OCI-LY7 (cell line): ENCODE measurements at regions of chr6 and their contacts with region 1.

Region 1: DNA sequence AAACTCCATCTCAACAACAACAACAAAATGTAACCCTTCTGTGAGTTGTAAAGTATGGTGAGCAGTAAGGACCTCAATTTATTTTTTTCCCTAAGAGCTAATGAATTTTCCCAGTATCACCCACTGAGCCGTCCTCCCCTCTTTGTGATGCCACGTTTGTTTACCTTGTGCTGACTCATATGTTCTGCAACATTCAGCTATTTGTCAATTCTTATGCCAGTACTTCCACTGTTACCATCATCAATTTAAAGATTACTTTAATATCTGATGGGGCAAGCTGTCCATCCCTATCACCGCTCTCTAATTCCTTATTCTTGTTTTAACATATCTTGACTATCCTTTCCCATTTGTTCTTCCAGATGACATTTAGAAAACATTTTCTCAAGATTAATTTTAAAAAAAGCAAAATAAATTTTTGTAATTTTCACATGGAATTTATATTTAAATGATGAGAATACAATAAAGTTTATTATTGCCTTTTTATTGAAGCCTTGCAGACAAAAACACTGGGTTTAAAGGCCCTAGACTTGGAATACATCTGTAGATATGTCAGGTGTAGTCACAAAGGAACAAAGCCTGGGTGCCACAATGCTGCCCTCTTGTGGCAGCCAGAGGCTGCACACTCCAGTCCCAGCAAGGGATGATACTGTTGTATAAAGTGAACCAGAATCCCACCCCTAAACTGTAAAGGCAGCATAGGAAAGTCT is 37.4 kb downstream of the MAK start:
- DNase-seq: peak; percentile 70
- H3K4me3 ChIP-seq: no peak overlapping the region
- H3K27ac ChIP-seq: no peak overlapping the region
- H3K4me1 ChIP-seq: no peaks in the 10 kb centered on the region
- CTCF ChIP-seq: peak; percentile 100

Region 2: GRCh38 chr6:10478187-10479040 is 322.6 kb before region 1 on chr6:
- CTCF ChIA-PET with region 1: interaction called, 3 read pairs
- POLR2A ChIA-PET with region 1: interaction called, 5 read pairs
- intact Hi-C with region 1: loop called (anchors 1 kb)
- DNase-seq: peak; percentile 69
- H3K4me3 ChIP-seq: no peak overlapping the region
- H3K27ac ChIP-seq: no peak overlapping the region
- H3K4me1 ChIP-seq: no peaks in the 10 kb centered on the region
- CTCF ChIP-seq: peak; percentile 92

Region 3: GRCh38 chr6:10510592-10511367 is 290.2 kb before region 1 on chr6:
- CTCF ChIA-PET with region 1: interaction called, 3 read pairs
- POLR2A ChIA-PET with region 1: interaction called, 11 read pairs
- intact Hi-C with region 1: loop called (anchors 1 kb)
- DNase-seq: peak; percentile 82
- H3K4me3 ChIP-seq: peak overlapping the region; percentile 11
- H3K27ac ChIP-seq: no peak overlapping the region
- H3K4me1 ChIP-seq: peaks cover 17% of the 10 kb centered on the region
- CTCF ChIP-seq: peak; percentile 96